ENCODE measurements at regions of chr12 and their contacts with region 1.

Region 1: DNA sequence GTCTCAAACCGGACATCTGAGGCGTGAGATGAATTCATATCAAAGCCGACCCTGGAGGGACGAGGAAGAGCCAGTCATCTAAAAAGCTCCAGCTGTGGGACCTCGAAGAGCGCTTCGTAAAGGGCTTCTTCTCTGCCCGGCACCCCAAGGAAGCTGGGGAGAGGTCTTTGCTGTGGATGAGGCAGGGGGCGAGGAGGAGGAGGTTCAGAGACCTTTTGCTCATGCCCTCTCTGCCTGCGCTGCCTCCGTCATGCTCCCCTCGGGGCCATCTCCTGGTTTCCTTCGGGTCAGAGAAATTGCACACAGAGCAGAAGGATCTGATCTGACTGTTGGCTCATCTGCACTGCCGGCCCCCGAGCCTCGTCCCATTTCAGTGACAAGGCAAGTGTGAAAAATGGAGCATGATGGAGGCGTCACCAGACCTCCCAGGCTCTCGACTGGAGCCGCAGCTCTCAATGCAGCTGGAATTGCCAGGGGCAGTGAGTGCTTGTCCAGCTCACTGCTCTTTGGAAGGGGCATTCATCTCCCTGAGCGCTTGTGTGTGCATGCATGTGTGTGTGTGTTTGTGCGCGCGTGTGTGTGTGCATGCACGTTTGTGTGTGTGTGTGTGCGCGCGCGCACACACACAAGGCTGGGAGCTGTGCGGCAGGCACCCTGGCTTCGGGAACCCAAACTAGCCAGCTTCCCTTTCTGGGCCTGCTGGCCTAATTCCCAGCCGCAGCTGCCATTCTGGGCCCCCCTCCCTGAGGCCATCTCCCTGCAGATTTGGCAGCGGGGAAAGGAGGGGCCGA is 9.2 kb downstream of the CABP1 start:
- DNase-seq: no peak
- ATAC-seq: no peak
- H3K4me3 Mint-ChIP-seq: peak overlapping the region; percentile 30
- H3K27ac Mint-ChIP-seq: no peak overlapping the region
- H3K4me1 Mint-ChIP-seq: peaks cover 20% of the 10 kb centered on the region
- H3K27me3 Mint-ChIP-seq: peaks cover 64% of the 10 kb centered on the region

Region 2: DNA sequence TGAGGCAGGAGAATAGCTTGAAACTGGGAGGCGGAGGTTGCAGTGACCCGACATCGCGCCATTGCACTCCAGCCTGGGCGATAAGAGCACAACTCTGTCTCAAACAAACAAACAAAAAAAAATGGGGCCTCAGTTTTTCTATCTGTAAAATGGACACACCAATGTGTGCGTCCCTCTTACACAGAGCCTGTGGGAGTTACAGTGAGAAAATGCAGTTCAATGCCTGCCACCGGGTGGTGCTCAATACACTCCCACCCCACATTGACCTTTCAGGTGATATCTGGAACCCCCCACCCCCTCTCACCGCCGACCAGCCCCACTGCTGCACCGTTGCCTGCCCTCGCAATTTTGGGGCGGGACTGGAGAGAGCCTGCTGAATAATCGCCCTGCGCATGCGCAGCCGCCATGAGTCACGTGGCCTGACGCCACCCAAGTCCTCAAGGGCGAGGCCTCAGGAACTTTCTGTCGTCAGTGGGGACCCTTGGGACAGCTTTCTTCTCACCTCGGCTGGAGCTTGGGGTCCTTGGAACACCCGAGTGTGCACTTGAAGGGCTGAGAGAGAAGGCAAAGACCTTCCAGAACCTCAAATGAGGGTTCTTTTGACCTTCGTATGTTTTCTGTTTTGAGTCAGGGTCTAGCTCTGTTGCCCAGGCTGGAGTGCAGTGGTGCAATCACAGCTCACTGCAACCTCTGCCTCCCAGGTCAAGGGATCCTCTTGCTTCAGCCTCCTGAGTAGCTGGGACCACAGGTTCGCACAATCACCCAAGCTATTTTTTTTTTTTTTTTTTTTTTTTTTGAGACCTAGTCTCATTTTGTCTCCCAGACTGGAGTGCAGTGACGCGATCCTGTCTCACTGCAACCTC is 23.8 kb before region 1 on chr12:
- CTCF ChIA-PET with region 1: interaction called, 10 read pairs
- DNase-seq: peak; percentile 61
- ATAC-seq: peak; percentile 33
- H3K4me3 Mint-ChIP-seq: no peak overlapping the region
- H3K27ac Mint-ChIP-seq: no peak overlapping the region
- H3K4me1 Mint-ChIP-seq: no peaks in the 10 kb centered on the region
- H3K27me3 Mint-ChIP-seq: peaks cover 10% of the 10 kb centered on the region

Region 3: DNA sequence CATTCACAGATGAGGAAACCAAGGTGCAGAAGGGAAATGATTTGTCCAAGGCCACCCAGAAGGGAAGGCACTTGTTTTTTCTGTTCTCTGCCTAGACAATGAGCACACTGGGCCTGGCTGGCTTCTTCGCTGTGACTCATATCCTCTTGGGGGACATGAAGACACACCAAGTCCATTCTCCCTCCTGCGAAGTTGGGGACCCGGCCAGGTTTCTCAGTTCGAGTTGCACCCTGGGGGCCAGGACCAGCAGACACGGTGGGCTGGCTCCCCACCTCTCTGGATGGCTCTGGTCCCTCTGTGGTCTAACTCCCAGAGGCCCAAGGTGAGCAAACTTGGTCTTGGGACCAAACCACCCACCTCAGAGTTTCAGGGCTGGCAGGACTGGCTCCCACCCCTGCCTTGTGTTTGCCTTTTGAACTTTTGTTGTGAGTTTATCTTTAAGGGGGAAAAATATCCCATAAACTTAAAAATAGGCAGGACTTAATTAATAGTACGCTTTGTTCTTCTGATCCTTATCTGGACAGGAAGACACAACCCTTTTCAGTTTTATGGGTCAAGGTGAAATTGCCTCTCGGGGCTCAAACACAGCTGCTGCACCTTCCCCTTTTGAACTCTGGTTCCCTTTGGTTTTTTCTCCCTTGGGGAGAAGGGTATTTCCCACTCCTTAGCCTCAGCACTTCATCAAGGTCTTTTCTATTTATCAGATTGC is 28.3 kb after region 1 on chr12:
- CTCF ChIA-PET with region 1: interaction called, 52 read pairs
- DNase-seq: peak; percentile 72
- ATAC-seq: peak; percentile 87
- H3K4me3 Mint-ChIP-seq: peak overlapping the region; percentile 29
- H3K27ac Mint-ChIP-seq: peak overlapping the region; percentile 85
- H3K4me1 Mint-ChIP-seq: peaks cover 29% of the 10 kb centered on the region
- H3K27me3 Mint-ChIP-seq: peaks cover 8% of the 10 kb centered on the region

Region 4: DNA sequence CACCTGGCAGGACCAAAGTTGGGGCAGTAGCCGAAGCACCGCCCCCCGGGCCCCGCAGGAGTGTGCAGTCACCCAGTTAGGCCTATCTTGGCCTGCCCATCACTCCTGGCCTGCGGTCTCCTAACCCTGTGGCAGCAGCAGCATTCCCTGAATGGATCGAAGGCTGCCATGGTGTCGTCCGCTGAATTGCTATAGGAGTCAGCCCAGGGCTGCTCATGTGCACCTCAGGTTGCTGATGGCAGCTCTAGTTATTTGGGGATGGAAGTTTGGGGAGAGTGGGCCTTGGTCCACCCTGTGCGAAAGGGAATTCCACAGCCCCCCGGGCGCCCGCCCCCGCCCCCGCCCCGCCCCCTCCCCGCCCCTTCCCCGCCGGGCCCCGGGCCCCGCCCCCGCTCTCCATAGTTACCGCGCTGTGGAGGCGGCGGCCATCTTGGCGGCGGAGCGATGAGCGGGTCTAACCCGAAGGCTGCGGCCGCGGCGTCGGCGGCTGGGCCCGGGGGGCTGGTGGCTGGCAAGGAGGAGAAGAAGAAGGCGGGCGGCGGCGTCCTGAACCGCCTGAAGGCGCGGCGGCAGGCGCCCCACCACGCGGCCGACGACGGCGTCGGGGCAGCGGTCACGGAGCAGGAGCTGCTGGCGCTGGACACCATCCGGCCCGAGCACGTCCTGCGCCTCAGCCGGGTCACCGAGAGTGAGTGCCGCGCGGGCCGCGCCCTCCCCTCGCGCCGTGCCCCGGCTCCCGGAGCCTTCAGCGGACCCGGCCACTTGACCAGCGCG is 60.6 kb after region 1 on chr12 and contains the start of gene UNC119B:
- CTCF ChIA-PET with region 1: interaction called, 60 read pairs
- DNase-seq: peak; percentile 77
- ATAC-seq: peak; percentile 85
- H3K4me3 Mint-ChIP-seq: peak within 1 kb of the TSS; percentile 82
- H3K27ac Mint-ChIP-seq: peak within 1 kb of the TSS; percentile 77
- H3K4me1 Mint-ChIP-seq: peaks cover 51% of the 10 kb centered on the region
- H3K27me3 Mint-ChIP-seq: no peaks in the 10 kb centered on the region
- total RNA-seq, gene UNC119B: 15.9 to 22.9 TPM

Measured in activated CD8-positive, alpha-beta memory T cell treated with anti-CD3 and anti-CD28 coated beads, Interleukin-2, amount 10 ng/mL, durations not matched to agents 7 days and 5 days (primary cell).